Endothelial cell of umbilical vein (primary cell): ENCODE measurements at regions of chr22 and their contacts with region 1.

Region 1: GRCh38 chr22:41780746-41781505 is 19.6 kb upstream of the CCDC134 start:
- DNase-seq: peak; percentile 49
- H3K4me3 ChIP-seq: no peak overlapping the region
- H3K27ac ChIP-seq: no peak overlapping the region
- H3K4me1 ChIP-seq: peaks cover 10% of the 10 kb centered on the region
- H3K27me3 ChIP-seq: no peaks in the 10 kb centered on the region
- CTCF ChIP-seq: no peak
- POLR2A ChIP-seq: no peak

Region 2: DNA sequence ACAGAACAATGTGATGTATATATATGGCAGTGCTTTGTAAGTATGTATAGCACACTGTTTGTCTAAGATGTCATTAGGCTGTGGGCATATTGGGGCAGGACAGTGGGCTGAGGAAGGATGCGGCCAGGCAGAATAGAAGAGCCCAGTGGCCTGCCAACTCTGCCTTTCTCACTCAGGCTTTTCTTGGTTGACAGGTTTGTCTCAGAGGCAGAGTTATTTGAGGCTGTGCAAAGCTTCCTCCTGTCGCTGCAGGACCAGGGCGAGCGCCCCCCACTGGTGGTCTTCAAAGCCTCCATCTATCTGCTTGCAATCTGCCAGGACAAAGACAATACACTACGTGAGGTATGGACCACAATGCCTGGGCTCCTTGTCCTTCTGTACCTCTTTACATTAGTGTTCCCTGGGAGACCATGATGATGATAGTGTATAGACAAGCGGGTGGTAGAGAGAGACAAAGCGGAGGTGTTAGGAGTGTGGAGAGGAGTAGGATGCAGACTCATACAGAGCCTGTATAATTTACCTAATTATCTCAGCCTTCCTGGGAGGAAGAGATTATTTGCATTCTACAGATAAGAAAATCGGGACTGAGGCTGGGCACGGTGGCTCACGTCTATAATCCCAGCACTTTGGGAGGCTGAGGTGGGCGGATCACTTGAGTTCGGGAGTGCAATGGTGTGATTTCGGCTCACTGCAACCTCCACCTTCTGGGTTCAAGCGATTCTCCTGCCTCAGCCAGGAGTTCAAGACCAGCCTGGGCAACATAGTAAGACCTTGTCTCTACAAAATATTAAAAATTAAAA is 17.7 kb before region 1 on chr22:
- CTCF ChIA-PET with region 1: interaction called, 5 read pairs
- POLR2A ChIA-PET with region 1: no interaction called
- dilution Hi-C with region 1: no loop called
- intact Hi-C with region 1: loop called (anchors 2 kb)
- DNase-seq: peak; percentile 16
- H3K4me3 ChIP-seq: no peak overlapping the region
- H3K27ac ChIP-seq: no peak overlapping the region
- H3K4me1 ChIP-seq: peaks cover under 1% of the 10 kb centered on the region
- H3K27me3 ChIP-seq: peaks cover 0 to 3% of the 10 kb centered on the region in 2 experiments
- CTCF ChIP-seq: peak; percentile 31 to 49
- POLR2A ChIP-seq: no peak

Region 3: GRCh38 chr22:41816181-41816621 is 35.3 kb after region 1 on chr22:
- CTCF ChIA-PET with region 1: no interaction called
- POLR2A ChIA-PET with region 1: no interaction called
- dilution Hi-C with region 1: no loop called
- intact Hi-C with region 1: no loop called
- DNase-seq: no peak
- H3K4me3 ChIP-seq: no peak overlapping the region
- H3K27ac ChIP-seq: no peak overlapping the region
- H3K4me1 ChIP-seq: no peaks in the 10 kb centered on the region
- H3K27me3 ChIP-seq: no peaks in the 10 kb centered on the region
- CTCF ChIP-seq: no peak
- POLR2A ChIP-seq: no peak